Activated CD4-positive, alpha-beta T cell treated with anti-CD3 and anti-CD28 coated beads, Interleukin-2, amount 10 ng/mL, durations not matched to agents 24 days and 14 days (primary cell): ENCODE measurements at regions of chr2 and their contacts with region 1.

Region 1: GRCh38 chr2:161426922-161427663 is 11.0 kb downstream of the TBR1 start:
- DNase-seq: peak; percentile 75
- H3K4me3 Mint-ChIP-seq: peak overlapping the region; percentile 72
- H3K27ac Mint-ChIP-seq: peak overlapping the region; percentile 60
- H3K4me1 Mint-ChIP-seq: peaks cover 23% of the 10 kb centered on the region
- H3K27me3 Mint-ChIP-seq: peaks cover 84% of the 10 kb centered on the region

Region 2: GRCh38 chr2:161414042-161415033 is 12.8 kb before region 1 on chr2:
- intact Hi-C with region 1: loop called (anchors 1 kb)
- DNase-seq: peak; percentile 68
- H3K4me3 Mint-ChIP-seq: peak overlapping the region; percentile 75
- H3K27ac Mint-ChIP-seq: no peak overlapping the region
- H3K4me1 Mint-ChIP-seq: peaks cover 44% of the 10 kb centered on the region
- H3K27me3 Mint-ChIP-seq: peaks cover 54% of the 10 kb centered on the region

Region 3: DNA sequence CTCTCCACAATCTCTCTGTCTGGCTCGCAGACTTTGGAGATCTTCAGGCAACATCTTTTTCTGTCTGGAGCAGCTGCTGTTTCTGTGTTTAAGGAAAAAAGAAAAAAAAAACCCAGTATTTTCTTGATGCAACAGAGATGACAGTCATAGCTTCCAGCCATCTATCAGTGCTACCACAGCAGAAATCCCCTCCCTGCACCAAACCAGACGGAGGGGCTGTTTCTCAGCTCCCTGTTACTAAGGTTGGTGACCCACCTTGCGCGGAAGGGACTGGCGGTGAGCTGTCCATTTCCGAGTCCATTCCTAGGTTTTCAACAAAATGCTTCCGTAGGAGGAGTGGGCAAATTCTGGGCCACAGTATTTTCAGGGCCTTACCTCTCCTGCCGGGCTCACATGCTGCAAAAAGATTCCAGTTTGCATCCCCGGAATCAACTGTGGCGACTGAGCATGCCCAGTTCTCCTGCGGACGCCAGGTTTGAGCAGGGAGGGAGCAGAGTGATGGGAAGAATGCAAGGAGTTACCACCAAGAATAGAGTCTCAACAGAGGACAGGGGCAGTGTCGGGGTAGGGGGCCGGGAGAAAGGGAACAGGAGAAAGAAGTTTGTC is 198.3 kb after region 1 on chr2:
- intact Hi-C with region 1: loop called (anchors 5 kb)
- DNase-seq: no peak
- H3K4me3 Mint-ChIP-seq: no peak overlapping the region
- H3K27ac Mint-ChIP-seq: no peak overlapping the region
- H3K4me1 Mint-ChIP-seq: peaks cover 6% of the 10 kb centered on the region
- H3K27me3 Mint-ChIP-seq: peaks cover 49% of the 10 kb centered on the region